ENCODE measurements at regions of chr22 and their contacts with region 1.

Region 1: DNA sequence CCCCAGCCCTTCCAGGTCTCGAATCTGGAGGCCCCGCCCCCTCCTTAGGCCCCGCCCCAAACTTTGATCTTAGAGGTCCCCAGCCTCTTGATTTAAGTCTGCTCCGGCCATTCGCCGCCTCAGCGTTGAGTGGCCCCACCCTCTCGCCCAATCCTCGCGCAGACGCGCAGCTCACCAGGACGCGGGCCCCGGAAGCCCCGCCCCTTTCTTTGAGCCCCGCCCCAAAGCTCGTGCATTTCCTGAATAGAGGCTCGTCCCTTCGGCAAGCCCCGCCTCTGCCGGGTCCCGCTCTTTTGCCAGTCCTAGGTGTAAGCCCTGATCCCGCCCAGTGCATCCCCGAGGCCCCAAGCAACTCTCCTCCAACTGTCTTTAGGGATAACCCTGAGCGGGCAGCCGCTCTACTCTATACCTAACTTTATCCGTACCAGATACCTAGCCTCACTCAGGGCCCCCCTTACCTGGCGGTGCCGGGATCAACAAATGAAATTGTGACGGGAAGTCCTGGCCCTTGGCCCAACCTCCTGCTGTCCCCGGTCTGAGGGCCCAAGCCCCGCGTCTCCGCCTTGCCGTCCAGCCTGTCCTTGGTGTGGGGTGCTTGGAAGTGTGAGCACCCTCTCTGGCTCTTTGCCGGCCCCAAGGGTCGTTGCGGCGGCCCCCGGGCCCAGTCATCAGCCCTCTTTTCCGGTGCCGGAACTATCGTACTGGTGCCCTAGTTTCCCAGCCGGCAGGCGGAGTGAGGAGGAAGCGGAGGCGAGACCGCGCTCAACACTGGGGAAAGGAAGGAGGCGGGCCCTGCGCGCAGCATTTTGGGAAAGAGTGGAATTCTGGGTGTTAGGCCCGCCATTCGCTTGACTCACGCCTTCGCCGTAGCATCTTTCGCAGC is at the start of gene SNRPD3:
- DNase-seq: peak; percentile 97 to 99
- H3K4me3 ChIP-seq: peak within 1 kb of the TSS; percentile 86
- H3K4me3 Mint-ChIP-seq: peak within 1 kb of the TSS; percentile 100
- H3K27ac Mint-ChIP-seq: peak within 1 kb of the TSS; percentile 99
- H3K4me1 ChIP-seq: peaks cover 41% of the 10 kb centered on the region
- H3K4me1 Mint-ChIP-seq: peaks cover 46% of the 10 kb centered on the region
- H3K27me3 ChIP-seq: no peaks in the 10 kb centered on the region
- H3K27me3 Mint-ChIP-seq: no peaks in the 10 kb centered on the region
- CTCF ChIP-seq: peak; percentile 19 to 30
- total RNA-seq, gene SNRPD3: 202 and 217 TPM in 2 replicates

Region 2: GRCh38 chr22:24423519-24424000 is 131.8 kb before region 1 on chr22:
- CTCF ChIA-PET with region 1: interaction called, 13 read pairs
- POLR2A ChIA-PET with region 1: interaction called, 3 read pairs
- intact Hi-C with region 1: no loop called
- DNase-seq: peak in 1 of 2 experiments; percentile 81
- H3K4me3 ChIP-seq: peak overlapping the region; percentile 68
- H3K4me3 Mint-ChIP-seq: peak overlapping the region; percentile 62
- H3K27ac Mint-ChIP-seq: no peak overlapping the region
- H3K4me1 ChIP-seq: peaks cover 13% of the 10 kb centered on the region
- H3K4me1 Mint-ChIP-seq: peaks cover 18% of the 10 kb centered on the region
- H3K27me3 ChIP-seq: no peaks in the 10 kb centered on the region
- H3K27me3 Mint-ChIP-seq: no peaks in the 10 kb centered on the region
- CTCF ChIP-seq: peak; percentile 51 to 93

Region 3: DNA sequence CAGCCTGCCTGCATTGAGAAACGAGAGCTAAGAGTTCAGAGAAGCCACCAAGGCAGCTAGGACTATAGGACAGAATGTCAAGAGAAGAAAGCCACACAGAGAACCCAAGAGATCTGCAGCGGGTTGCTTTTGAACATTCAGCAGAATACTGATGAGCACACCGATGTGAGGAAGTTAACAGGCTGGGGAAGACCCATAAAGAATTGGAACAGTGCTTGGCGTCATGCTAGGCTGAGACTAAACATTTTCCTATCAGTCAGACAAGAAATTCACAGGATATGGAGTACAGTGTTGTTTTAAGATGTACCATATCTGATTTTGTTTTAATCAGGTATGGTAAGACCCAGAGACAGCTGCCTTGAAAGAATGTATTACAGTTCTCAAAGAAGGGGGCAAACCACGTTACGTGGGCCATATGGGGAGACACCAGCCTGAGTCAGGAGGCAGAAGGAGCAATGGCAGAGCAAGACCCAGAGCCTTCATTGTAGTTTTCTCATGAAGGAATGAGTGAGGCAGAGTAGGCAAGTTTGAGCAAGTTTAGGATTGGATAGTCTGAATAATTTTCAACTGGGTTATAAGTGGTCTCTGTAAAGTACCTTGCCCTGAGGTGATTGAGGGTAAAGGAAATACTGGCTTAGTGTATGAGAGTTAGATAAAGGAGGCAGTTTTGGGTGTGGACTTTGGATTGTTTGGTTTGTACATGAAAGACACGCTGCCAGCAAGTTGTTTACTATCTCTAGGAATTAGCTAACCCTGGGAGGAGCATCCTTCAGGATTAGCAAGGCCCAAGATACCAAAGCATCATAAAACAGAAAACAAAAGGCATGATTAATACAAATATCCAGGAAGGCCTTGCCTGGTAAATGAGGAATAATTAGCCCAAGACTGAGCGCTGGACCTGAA is 23.2 kb after region 1 on chr22:
- CTCF ChIA-PET with region 1: no interaction called
- POLR2A ChIA-PET with region 1: interaction called, 3 read pairs
- intact Hi-C with region 1: loop called (anchors 1 kb)
- DNase-seq: peak; percentile 79 to 80
- H3K4me3 ChIP-seq: no peak overlapping the region
- H3K4me3 Mint-ChIP-seq: peak overlapping the region; percentile 38
- H3K27ac Mint-ChIP-seq: peak overlapping the region; percentile 84
- H3K4me1 ChIP-seq: peaks cover 47% of the 10 kb centered on the region
- H3K4me1 Mint-ChIP-seq: peaks cover 46% of the 10 kb centered on the region
- H3K27me3 ChIP-seq: no peaks in the 10 kb centered on the region
- H3K27me3 Mint-ChIP-seq: no peaks in the 10 kb centered on the region
- CTCF ChIP-seq: no peak

Region 4: DNA sequence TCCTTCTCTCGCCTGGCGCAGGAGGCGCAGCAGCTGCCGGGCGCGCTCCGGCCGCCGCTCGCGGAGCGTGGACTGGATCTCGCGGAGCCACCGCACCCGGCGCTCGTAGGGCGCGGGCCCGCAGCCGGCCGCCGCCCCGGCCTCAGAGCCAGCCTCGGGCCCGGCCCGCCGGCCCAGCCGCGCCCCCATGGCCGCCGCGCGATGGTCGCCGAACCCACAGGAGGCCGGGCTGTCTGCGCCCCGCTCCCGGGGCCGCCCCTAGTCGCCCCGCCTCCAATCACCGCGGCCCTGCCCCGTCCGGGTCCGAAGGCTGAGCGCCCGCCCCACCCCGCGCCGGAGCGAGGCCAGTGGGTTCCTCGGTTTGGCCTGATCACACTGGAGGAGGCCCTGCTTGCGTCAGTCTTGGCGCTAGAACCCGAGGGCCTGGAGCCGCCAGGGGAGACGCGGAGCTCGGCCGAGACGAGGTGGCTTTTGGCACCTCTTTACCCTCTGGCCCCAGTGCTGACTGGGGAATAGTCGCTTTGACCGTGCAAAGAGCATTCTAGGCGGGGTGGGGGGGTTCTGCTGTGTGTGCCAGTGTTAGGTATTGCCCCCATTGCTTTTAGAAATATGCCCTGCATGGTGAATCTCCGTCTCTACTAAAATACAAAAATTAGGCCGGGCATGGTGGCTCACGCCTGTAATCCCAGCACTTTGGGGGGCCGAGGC is 37.6 kb after region 1 on chr22 and contains the start of gene LRRC75B:
- CTCF ChIA-PET with region 1: no interaction called
- POLR2A ChIA-PET with region 1: no interaction called
- intact Hi-C with region 1: loop called (anchors 1 kb)
- DNase-seq: peak; percentile 92 to 95
- H3K4me3 ChIP-seq: peak within 1 kb of the TSS; percentile 82
- H3K4me3 Mint-ChIP-seq: peak within 1 kb of the TSS; percentile 86
- H3K27ac Mint-ChIP-seq: peak within 1 kb of the TSS; percentile 79
- H3K4me1 ChIP-seq: peaks cover 10% of the 10 kb centered on the region
- H3K4me1 Mint-ChIP-seq: no peaks in the 10 kb centered on the region
- H3K27me3 ChIP-seq: no peaks in the 10 kb centered on the region
- H3K27me3 Mint-ChIP-seq: no peaks in the 10 kb centered on the region
- CTCF ChIP-seq: no peak
- total RNA-seq, gene LRRC75B: 18.6 and 20.4 TPM in 2 replicates